ENCODE measurements at regions of chr6 and their contacts with region 1.

Region 1: GRCh38 chr6:44456070-44456965 is 68.8 kb downstream of the CDC5L start:
- DNase-seq: peak; percentile 66
- ATAC-seq: peak; percentile 91
- H3K4me3 Mint-ChIP-seq: no peak overlapping the region
- H3K27ac Mint-ChIP-seq: no peak overlapping the region
- H3K4me1 Mint-ChIP-seq: no peaks in the 10 kb centered on the region
- H3K27me3 Mint-ChIP-seq: no peaks in the 10 kb centered on the region

Region 2: DNA sequence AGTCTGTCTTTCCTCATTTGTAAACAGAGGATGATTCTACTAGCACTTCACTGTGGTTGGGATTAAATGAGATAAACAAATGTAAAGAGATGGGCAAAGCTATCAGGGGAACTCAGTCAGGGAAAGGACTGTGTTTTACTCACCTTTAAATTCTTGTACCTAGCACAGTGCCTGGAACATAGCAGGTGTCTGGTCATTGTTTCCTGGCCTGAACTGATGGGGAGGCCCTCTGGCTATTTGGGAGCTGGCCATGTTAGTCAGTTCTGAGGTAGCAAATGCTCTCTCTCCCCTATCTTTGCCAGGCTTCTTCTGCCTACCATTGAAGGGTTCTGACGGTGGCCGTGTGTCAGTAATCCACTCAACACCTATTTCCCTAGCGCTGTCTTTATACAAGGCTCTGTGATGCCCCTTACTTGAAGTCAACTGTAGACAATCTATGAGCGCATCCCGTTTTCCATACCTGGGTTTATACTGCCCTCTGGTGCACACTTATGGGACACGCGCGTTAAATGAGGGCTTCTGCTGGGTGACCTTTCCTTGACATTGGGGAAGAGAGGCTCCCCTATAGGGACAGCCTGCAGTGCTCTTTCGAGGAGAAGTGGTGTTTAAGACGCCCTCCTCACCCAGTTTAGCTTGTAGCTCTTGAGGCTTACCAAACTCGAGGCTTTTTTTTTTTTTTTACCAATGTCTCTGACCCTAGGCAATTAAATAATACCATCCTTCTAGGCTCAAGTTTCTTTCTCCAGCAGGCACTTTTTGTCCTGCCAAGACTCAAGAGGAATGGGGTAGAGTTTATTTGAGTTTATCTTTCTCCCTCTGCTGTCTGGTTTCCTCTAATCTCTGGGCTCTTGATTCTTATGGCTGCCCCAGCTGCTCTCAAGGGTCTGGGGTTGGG is 117.8 kb before region 1 on chr6:
- CTCF ChIA-PET with region 1: interaction called, 10 read pairs
- POLR2A ChIA-PET with region 1: no interaction called
- intact Hi-C with region 1: loop called in 1 of 2 experiments (anchors 1 kb)
- DNase-seq: peak; percentile 81
- ATAC-seq: peak; percentile 84
- H3K4me3 Mint-ChIP-seq: no peak overlapping the region
- H3K27ac Mint-ChIP-seq: no peak overlapping the region
- H3K4me1 Mint-ChIP-seq: peaks cover 5% of the 10 kb centered on the region
- H3K27me3 Mint-ChIP-seq: peaks cover 15% of the 10 kb centered on the region

Region 3: GRCh38 chr6:44431118-44431725 is 25.1 kb before region 1 on chr6:
- CTCF ChIA-PET with region 1: interaction called, 41 read pairs
- POLR2A ChIA-PET with region 1: no interaction called
- intact Hi-C with region 1: loop called (anchors 1 kb)
- DNase-seq: peak; percentile 66
- ATAC-seq: peak; percentile 85
- H3K4me3 Mint-ChIP-seq: no peak overlapping the region
- H3K27ac Mint-ChIP-seq: no peak overlapping the region
- H3K4me1 Mint-ChIP-seq: peaks cover 2% of the 10 kb centered on the region
- H3K27me3 Mint-ChIP-seq: no peaks in the 10 kb centered on the region

Region 4: DNA sequence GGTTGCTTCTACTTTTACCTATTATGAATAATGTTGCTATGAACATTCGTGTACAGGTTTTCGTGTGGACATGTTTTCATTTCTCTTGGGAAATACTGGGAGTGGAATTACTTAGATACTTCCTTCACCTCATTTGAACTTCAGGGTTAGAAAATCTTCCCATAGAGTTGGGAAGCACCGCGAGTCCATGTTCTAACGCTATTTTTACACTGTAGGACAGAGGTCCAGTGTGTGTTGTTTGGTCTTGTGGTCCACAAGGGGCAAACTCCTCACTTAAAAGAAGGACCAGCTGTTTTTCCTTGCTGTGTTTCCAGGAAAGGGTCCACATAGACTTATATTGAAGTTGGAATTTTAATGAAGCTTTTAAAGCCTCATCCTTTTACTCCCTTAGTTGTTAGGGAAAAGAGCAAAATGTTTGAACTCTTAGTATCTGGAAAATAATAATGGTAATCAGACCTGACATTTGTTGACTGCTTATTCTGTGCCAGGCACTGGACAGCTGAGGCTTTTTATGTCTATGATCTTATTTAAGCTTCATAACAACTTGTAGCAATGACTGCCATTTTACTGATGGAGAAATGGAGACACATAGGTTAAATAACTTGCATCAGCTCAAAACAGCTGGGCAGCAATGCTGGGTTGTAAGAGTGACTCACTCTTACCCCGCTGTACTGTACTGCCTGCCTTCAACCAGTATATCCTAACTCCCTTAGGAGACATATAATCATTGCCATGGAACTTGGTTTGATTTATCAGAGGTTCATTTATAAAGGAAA is 16.9 kb before region 1 on chr6:
- CTCF ChIA-PET with region 1: interaction called, 13 read pairs
- POLR2A ChIA-PET with region 1: no interaction called
- intact Hi-C with region 1: no loop called
- DNase-seq: no peak
- ATAC-seq: peak; percentile 66
- H3K4me3 Mint-ChIP-seq: no peak overlapping the region
- H3K27ac Mint-ChIP-seq: peak overlapping the region; percentile 45
- H3K4me1 Mint-ChIP-seq: peaks cover 3% of the 10 kb centered on the region
- H3K27me3 Mint-ChIP-seq: no peaks in the 10 kb centered on the region

Region 5: GRCh38 chr6:44470746-44471145 is 14.4 kb after region 1 on chr6:
- CTCF ChIA-PET with region 1: interaction called, 14 read pairs
- POLR2A ChIA-PET with region 1: no interaction called
- intact Hi-C with region 1: no loop called
- DNase-seq: no peak
- ATAC-seq: no peak
- H3K4me3 Mint-ChIP-seq: no peak overlapping the region
- H3K27ac Mint-ChIP-seq: no peak overlapping the region
- H3K4me1 Mint-ChIP-seq: no peaks in the 10 kb centered on the region
- H3K27me3 Mint-ChIP-seq: no peaks in the 10 kb centered on the region